ENCODE measurements at regions of chr7 and their contacts with region 1.

Region 1: DNA sequence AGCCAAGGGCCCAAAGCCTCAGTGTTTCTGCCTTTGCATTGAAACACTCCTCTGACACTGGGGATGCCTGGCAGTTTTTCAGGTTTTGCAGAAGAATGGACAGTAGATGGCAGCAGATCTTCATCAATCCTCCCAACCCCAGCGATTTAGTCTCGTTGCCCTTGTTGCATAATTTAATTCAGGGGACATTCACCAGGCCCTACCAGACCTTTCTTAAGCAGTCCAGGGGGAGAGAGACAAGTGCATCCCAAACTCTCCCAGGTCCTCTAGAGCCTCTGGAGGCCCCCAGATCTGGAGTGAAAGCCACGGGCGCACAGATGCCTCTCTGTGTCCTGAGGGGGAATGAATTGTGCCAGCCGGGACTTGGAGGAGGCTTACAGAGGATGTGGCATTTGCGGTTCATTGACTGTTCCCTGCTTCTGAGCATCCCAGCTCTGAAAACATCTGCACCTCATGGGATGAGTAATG is 29.6 kb downstream of the MINDY4 start:
- DNase-seq: no peak
- ATAC-seq: peak; percentile 86
- H3K4me3 ChIP-seq: no peak overlapping the region
- H3K27ac ChIP-seq: peak overlapping the region in 1 of 2 donors; percentile 92
- H3K4me1 ChIP-seq: peaks cover 4 to 16% of the 10 kb centered on the region in 2 donors
- H3K27me3 ChIP-seq: no peaks in the 10 kb centered on the region

Region 2: GRCh38 chr7:30845426-30846135 is 44.8 kb after region 1 on chr7:
- intact Hi-C with region 1: loop called (anchors 1 to 5 kb)
- DNase-seq: peak in 1 of 2 donors; percentile 79
- ATAC-seq: peak; percentile 65
- H3K4me3 ChIP-seq: no peak overlapping the region
- H3K27ac ChIP-seq: peak overlapping the region; percentile 91 to 95
- H3K4me1 ChIP-seq: peaks cover 0 to 3% of the 10 kb centered on the region in 2 donors
- H3K27me3 ChIP-seq: no peaks in the 10 kb centered on the region

Region 3: GRCh38 chr7:30851651-30852307 is 51.0 kb after region 1 on chr7:
- intact Hi-C with region 1: loop called in 1 of 2 experiments (anchors 5 kb)
- DNase-seq: peak; percentile 82 to 87
- ATAC-seq: peak; percentile 77
- H3K4me3 ChIP-seq: no peak overlapping the region
- H3K27ac ChIP-seq: peak overlapping the region; percentile 95
- H3K4me1 ChIP-seq: no peaks in the 10 kb centered on the region
- H3K27me3 ChIP-seq: no peaks in the 10 kb centered on the region

Region 4: GRCh38 chr7:30974605-30975255 is 173.9 kb after region 1 on chr7:
- intact Hi-C with region 1: loop called (anchors 1 to 2 kb)
- DNase-seq: peak; percentile 70 to 85
- ATAC-seq: peak; percentile 63
- H3K4me3 ChIP-seq: no peak overlapping the region
- H3K27ac ChIP-seq: no peak overlapping the region
- H3K4me1 ChIP-seq: no peaks in the 10 kb centered on the region
- H3K27me3 ChIP-seq: no peaks in the 10 kb centered on the region

Region 5: GRCh38 chr7:31122649-31123058 is 321.8 kb after region 1 on chr7:
- intact Hi-C with region 1: loop called (anchors 2 to 5 kb)
- DNase-seq: peak in 1 of 2 donors; percentile 67
- ATAC-seq: peak; percentile 85
- H3K4me3 ChIP-seq: no peak overlapping the region
- H3K27ac ChIP-seq: no peak overlapping the region
- H3K4me1 ChIP-seq: no peaks in the 10 kb centered on the region
- H3K27me3 ChIP-seq: no peaks in the 10 kb centered on the region

Region 6: GRCh38 chr7:31744294-31744874 is 943.6 kb after region 1 on chr7:
- intact Hi-C with region 1: loop called in 1 of 2 experiments (anchors 10 kb)
- DNase-seq: peak; percentile 61 to 84
- ATAC-seq: no peak
- H3K4me3 ChIP-seq: no peak overlapping the region
- H3K27ac ChIP-seq: no peak overlapping the region
- H3K4me1 ChIP-seq: no peaks in the 10 kb centered on the region
- H3K27me3 ChIP-seq: peaks cover 0 to under 1% of the 10 kb centered on the region in 2 donors

Measured in aorta (tissue), 5 donors.